A673 (cell line): ENCODE measurements at regions of chr17 and their contacts with region 1.

Region 1: DNA sequence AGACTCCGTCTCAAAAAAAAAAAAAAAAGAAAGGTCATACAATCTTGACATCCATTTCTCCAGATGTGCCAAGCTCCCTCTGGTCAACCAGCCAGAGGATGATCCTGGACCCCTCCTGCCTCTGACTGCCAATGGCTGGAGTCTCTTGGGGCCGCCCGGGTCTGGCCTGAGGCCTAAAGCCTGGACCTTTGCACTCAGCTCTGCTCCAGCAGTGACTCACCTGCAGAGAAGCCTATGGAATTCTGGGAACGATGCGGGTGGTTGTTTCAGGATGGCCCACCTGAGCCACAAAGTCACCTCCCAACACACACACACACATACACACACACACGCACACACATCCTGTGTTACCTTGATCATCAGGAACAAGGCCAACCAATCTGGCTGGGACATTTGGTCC is 64.0 kb upstream of the DNAH17 start:
- DNase-seq: no peak
- H3K4me3 ChIP-seq: no peak overlapping the region
- H3K27ac ChIP-seq: no peak overlapping the region
- H3K4me1 ChIP-seq: no peaks in the 10 kb centered on the region
- H3K27me3 ChIP-seq: no peaks in the 10 kb centered on the region
- CTCF ChIP-seq: no peak

Region 2: GRCh38 chr17:78329263-78330059 is 311.8 kb before region 1 on chr17:
- CTCF ChIA-PET with region 1: no interaction called
- POLR2A ChIA-PET with region 1: no interaction called
- intact Hi-C with region 1: no loop called
- DNase-seq: no peak
- H3K4me3 ChIP-seq: no peak overlapping the region
- H3K27ac ChIP-seq: peak overlapping the region; percentile 30
- H3K4me1 ChIP-seq: peaks cover 5% of the 10 kb centered on the region
- H3K27me3 ChIP-seq: no peaks in the 10 kb centered on the region
- CTCF ChIP-seq: no peak

Region 3: DNA sequence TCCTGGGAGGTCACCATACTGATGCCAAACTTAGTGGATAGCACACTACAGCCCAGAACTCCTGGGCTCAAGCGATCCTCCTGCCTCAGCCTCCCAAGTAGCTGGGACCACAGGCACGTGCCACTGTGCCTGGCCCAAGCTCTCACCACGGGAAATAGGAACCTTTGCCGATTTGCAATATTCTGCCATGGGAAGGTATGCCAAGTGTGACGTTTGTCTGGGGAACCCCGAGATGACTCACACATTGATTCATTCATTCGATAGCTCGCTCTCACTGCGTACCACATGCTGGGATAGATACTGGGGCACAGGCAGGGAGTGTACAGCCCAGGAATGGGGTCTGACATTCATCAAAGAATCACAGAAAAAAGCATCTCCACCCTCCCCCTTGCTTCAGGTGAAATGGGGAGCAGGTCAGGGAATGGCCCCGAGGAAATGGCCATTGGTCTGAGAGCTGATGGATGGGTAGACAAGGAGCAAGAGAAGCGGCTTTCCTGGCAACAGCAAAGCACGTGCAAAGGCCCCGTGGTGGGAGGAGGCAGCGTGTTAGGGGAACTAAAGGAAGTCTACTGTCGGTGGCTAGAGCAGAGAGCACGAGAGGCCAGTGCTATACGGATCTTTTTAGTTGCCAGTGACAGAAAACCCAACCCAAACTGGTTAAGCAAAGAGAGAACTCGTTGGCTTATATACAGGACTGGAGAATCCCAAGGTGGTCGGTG is 108.2 kb before region 1 on chr17:
- CTCF ChIA-PET with region 1: no interaction called
- POLR2A ChIA-PET with region 1: no interaction called
- intact Hi-C with region 1: no loop called
- DNase-seq: peak; percentile 57
- H3K4me3 ChIP-seq: no peak overlapping the region
- H3K27ac ChIP-seq: no peak overlapping the region
- H3K4me1 ChIP-seq: no peaks in the 10 kb centered on the region
- H3K27me3 ChIP-seq: no peaks in the 10 kb centered on the region
- CTCF ChIP-seq: no peak

Region 4: GRCh38 chr17:79668344-79669250 is 1027.4 kb after region 1 on chr17:
- CTCF ChIA-PET with region 1: no interaction called
- POLR2A ChIA-PET with region 1: interaction called, 10 read pairs
- intact Hi-C with region 1: no loop called
- DNase-seq: no peak
- H3K4me3 ChIP-seq: no peak overlapping the region
- H3K27ac ChIP-seq: no peak overlapping the region
- H3K4me1 ChIP-seq: no peaks in the 10 kb centered on the region
- H3K27me3 ChIP-seq: peaks cover 36% of the 10 kb centered on the region
- CTCF ChIP-seq: no peak